ENCODE measurements at regions of chr4 and their contacts with region 1.

Region 1: GRCh38 chr4:72302981-72303704 is 265.9 kb downstream of the ADAMTS3 start:
- DNase-seq: peak; percentile 35
- H3K4me3 ChIP-seq: no peak overlapping the region
- H3K27ac ChIP-seq: no peak overlapping the region
- H3K27me3 ChIP-seq: no peaks in the 10 kb centered on the region
- CTCF ChIP-seq: peak; percentile 75

Region 2: GRCh38 chr4:72468904-72469502 is 165.9 kb after region 1 on chr4:
- in situ Hi-C with region 1: loop called (anchors 25 kb)
- DNase-seq: no peak
- H3K4me3 ChIP-seq: no peak overlapping the region
- H3K27ac ChIP-seq: no peak overlapping the region
- H3K27me3 ChIP-seq: no peaks in the 10 kb centered on the region
- CTCF ChIP-seq: peak; percentile 26